Left ventricle myocardium inferior (tissue), 1 donor: ENCODE measurements at regions of chr11 and their contacts with region 1.

Region 1: DNA sequence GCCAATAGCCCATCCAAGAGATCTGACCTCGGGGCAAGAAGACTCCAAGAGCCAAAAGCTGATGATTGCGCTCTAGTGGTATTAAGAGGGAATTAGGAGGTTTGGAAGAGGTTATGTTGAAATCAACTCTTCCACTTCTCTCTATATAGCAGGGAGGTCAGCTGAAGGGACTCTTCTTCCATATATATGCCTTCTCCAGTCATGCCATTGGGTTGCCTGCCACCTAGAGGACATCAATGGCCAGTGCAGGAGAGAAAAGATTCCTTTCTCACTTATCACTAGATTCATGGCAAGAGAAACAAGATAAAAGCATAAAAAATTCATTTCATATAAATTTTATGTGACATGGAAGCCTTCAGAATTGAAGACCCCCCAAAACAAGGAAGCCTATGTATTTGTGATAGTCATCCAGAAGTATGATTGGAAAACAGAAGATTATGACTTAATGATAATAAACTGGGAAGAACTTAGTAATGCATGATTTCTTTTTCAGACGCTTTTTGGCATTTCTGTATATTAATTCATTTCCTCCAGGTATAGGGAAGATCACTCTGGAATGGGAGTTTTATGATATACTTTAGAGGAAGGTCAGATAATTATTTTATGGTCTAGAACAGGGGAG is 435.1 kb upstream of the DDI1 start:
- DNase-seq: no peak
- H3K4me3 ChIP-seq: no peak overlapping the region
- H3K27ac ChIP-seq: no peak overlapping the region
- H3K4me1 ChIP-seq: no peaks in the 10 kb centered on the region
- H3K27me3 ChIP-seq: no peaks in the 10 kb centered on the region
- CTCF ChIP-seq: peak; percentile 93

Region 2: DNA sequence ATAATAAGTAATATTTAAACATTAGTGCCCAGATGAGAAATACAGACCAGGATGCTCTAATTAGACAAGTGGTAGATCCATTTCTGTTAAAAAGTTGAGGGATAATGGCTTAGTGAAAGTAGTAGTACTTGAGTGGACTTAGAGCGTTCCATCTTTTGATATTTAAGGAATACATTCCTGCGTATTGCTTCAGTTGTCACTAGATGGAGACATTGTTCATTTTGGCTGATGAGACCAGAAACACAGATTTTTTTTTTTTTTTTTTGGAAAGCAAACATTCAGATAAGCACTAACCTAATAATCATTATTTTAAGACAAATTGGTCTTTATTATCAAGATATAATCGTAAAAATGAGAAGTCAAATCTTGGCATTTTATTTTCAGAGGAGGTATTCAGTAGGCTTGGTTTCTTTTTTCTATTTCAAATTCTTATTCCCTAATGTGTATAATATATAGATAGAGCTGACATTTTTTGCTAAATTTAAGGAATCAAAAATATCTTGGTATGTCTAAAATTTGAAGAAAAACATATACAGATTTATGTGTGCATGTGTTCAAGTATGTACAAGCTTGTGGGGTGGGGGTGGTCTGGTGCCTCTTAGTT is 399.2 kb before region 1 on chr11:
- intact Hi-C with region 1: loop called (anchors 10 kb)
- DNase-seq: no peak
- H3K4me3 ChIP-seq: no peak overlapping the region
- H3K27ac ChIP-seq: no peak overlapping the region
- H3K4me1 ChIP-seq: no peaks in the 10 kb centered on the region
- H3K27me3 ChIP-seq: no peaks in the 10 kb centered on the region
- CTCF ChIP-seq: peak; percentile 62

Region 3: GRCh38 chr11:103234974-103235373 is 366.4 kb before region 1 on chr11:
- intact Hi-C with region 1: no loop called
- DNase-seq: no peak
- H3K4me3 ChIP-seq: no peak overlapping the region
- H3K27ac ChIP-seq: no peak overlapping the region
- H3K4me1 ChIP-seq: no peaks in the 10 kb centered on the region
- H3K27me3 ChIP-seq: no peaks in the 10 kb centered on the region
- CTCF ChIP-seq: no peak

Region 4: DNA sequence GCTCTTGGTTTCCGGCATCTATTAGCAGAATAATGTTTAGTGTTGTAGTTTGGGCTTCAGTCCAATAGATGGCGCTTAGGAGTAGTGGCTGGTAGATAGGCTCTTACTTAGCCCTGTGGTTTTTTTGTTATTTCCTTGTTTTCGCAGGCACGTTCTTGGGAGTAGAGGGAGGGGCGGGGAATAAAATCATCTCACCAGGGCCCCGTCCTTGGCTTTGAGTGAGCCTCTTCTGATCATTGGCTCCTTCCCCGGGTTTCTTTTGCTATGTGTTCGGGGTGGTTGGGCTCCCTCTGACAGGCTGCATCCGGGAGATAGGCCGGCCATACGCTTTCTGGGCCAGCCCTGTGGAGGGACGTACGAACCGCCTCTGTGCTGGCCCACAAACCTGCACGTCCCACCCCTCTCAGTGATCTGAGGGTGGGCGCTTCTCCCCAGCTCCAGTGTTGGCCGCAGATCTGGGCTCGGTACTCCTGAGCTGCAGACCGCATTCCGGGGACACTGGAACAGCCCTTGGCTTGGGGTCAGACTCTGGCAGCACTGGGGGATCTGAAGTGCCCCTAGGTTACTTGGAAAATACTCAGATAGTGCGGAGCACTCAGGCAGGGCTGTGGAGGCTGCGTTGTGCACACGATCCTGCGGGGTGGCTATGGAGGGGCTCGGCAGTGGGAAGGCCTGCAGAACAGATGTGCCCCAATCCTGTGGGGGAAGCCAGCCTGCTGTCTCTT is 275.1 kb before region 1 on chr11:
- intact Hi-C with region 1: loop called (anchors 5 kb)
- DNase-seq: no peak
- H3K4me3 ChIP-seq: no peak overlapping the region
- H3K27ac ChIP-seq: no peak overlapping the region
- H3K4me1 ChIP-seq: peaks cover 17% of the 10 kb centered on the region
- H3K27me3 ChIP-seq: no peaks in the 10 kb centered on the region
- CTCF ChIP-seq: peak; percentile 70